ENCODE measurements at regions of chr12 and their contacts with region 1.

Region 1: DNA sequence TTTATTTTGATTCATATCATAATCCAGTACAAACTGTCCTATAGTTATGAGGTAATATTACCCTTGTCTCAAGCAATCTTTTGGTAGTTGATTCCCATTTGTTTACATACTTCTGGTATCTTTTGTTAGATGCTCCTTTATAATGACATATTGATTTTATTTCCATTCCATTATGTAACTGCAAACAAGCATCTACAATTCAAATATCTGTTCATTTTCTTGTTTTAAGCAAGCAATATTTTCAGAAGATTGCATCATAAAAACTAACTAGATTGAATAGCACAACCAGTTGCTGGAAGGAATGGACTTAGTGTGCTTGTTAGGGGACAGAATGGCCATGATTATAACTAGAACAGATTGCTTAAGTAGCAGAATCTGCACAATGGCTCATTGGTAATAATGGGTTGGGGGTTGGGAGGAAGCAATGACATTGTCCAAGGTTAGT is 939.4 kb downstream of the SLC16A7 start:
- DNase-seq: no peak
- H3K4me3 ChIP-seq: no peak overlapping the region
- H3K27ac ChIP-seq: no peak overlapping the region
- H3K4me1 ChIP-seq: no peaks in the 10 kb centered on the region
- H3K27me3 ChIP-seq: no peaks in the 10 kb centered on the region
- CTCF ChIP-seq: no peak
- POLR2A ChIP-seq: no peak

Region 2: DNA sequence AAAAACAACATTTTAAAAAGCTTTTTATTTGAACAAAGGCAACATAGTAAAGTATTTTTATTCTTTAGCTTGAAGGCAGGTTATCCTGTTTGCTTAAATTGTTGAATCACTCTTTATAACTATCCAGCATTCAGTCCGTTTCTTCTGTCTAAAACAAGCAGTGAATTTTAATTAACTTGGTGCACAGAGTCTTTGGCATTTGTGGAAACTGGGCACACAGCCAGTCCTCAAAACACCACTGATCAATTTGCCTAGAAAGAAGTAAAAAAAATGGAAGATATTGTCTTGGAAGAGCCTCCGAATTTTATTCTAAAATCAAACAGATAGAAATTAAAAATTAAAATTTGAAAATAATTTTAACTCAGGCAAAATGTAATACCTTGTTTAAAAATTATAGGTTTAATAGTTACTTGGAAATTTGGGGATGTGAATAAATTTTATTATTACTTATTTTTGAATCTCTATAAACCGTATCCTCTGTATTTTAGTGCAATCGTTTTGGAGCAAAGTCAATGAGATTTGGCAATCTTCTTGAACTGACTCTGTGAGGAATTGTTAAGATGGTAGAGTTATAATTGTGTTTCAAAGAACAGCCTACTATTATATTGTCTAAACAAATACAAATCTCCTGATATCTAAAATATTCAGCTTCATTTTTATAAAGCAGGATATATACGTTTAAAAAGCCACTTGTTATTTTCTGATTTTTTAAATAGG is 12.4 kb before region 1 on chr12:
- intact Hi-C with region 1: loop called (anchors 1 kb)
- DNase-seq: no peak
- H3K4me3 ChIP-seq: no peak overlapping the region
- H3K27ac ChIP-seq: no peak overlapping the region
- H3K4me1 ChIP-seq: no peaks in the 10 kb centered on the region
- H3K27me3 ChIP-seq: no peaks in the 10 kb centered on the region
- CTCF ChIP-seq: no peak
- POLR2A ChIP-seq: no peak

Measured in vagina (tissue), 2 donors.